ENCODE measurements at regions of chr11 and their contacts with region 1.

Region 1: DNA sequence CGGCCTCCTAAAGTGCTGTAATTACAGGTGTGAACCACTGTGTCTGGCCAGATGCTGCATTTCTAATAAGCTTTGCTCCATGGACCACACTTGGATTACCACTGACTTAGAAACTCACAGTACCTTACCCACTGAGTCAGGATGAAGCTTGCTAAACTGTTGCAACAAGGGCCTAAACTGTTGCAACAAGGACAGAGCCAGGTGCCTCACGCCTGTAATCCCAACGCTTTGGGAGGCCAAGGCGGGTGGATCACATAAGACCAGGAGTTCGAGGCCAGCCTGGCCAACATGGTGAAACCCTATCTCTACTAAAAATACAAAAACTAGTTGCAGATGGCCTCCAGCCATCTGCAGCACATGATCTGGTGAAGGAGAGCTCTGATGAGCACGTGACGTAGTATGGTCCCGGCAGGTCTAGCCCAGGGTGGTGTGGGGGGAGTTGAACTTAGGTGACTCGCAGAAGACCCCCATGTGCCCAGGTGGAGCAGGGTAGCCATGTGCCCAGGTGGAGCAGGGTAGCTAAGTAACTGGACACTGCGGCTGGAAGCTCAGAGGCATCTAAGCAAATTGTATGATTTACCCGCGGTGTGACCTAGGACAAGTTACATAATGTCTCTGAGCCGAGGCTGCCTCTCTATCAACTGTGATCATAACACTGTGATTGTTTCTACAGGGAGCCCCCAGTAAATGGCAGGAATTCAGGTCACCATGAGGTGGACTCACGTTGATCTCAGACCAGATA is 8.4 kb downstream of the SLC25A45 start:
- DNase-seq: no peak
- H3K4me3 ChIP-seq: no peak overlapping the region
- H3K27ac ChIP-seq: no peak overlapping the region
- H3K4me1 ChIP-seq: no peaks in the 10 kb centered on the region
- H3K27me3 ChIP-seq: no peaks in the 10 kb centered on the region
- CTCF ChIP-seq: no peak
- POLR2A ChIP-seq: no peak

Region 2: GRCh38 chr11:65516135-65516935 is 142.3 kb after region 1 on chr11:
- intact Hi-C with region 1: loop called (anchors 5 kb)
- DNase-seq: no peak
- H3K4me3 ChIP-seq: no peak overlapping the region
- H3K27ac ChIP-seq: no peak overlapping the region
- H3K4me1 ChIP-seq: no peaks in the 10 kb centered on the region
- H3K27me3 ChIP-seq: no peaks in the 10 kb centered on the region
- CTCF ChIP-seq: no peak
- POLR2A ChIP-seq: no peak